ENCODE measurements at regions of chr15 and their contacts with region 1.

Region 1: GRCh38 chr15:68304589-68305337 is 27.2 kb downstream of the FEM1B start:
- DNase-seq: no peak

Region 2: DNA sequence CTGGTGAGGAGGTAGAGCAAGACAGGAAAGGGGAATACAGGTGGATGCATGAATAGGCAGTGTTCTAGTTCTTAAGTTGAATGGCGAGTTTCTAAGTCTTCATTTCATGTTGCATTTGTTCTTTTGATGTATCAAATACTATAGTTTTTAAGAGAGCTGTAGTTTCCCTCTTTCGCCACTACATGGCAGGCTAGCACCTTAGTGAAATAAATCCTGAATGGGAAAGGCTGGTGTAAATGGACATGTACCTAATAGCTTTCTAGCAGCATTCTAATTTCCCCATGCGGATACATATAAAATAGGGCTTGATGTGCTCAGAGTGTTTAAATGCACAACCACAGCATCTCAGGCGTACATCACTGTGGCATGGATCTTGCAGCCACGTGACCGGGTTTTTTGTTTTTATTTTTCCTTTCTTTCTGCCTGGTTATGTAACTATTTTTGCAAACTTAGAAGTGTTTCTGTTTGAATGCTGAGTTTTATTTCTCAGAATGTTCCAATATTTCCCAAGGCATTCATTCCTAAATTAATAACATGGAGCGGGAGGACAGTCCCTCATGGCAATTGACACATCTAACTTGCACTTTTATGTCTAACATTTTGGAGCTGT is 51.7 kb before region 1 on chr15:
- CTCF ChIA-PET with region 1: interaction called, 49 read pairs
- POLR2A ChIA-PET with region 1: no interaction called
- DNase-seq: peak; percentile 62

Measured in HEK293T (cell line).